ENCODE measurements at regions of chr9 and their contacts with region 1.

Region 1: DNA sequence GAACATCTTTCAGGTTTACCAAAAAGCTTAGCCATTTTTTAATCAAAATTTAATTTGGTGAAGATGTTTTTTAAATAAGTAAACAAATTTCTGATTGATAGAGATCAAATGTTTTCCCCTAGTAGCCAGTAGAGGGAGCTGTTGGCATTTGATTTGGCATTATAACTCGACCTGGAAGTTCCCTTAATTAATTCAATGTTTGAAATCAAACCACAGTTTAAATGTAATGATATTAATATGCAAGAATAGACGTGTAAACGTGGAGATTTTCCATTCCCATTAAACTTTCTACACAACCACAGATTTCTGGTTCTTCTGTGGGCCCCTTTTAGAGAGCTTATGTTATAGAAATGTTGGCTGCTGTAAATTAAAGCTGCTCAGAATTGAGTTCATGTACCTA is 148.1 kb upstream of the MPDZ start:
- DNase-seq: peak in 1 of 2 donors; percentile 16
- ATAC-seq: peak; percentile 51 to 73
- H3K4me3 ChIP-seq: peak overlapping the region in 1 of 4 donors; percentile 14
- H3K27ac ChIP-seq: peak overlapping the region; percentile 3 to 57 (median 19)
- H3K4me1 ChIP-seq: peaks cover 19 to 25% of the 10 kb centered on the region in 2 donors
- H3K27me3 ChIP-seq: no peaks in the 10 kb centered on the region
- CTCF ChIP-seq: peak; percentile 72 to 87 (median 79)
- POLR2A ChIP-seq: no peak

Region 2: GRCh38 chr9:13688994-13689600 is 261.5 kb after region 1 on chr9:
- in situ Hi-C with region 1: no loop called
- intact Hi-C with region 1: loop called (anchors 2 kb)
- DNase-seq: no peak
- ATAC-seq: peak in 1 of 2 donors; percentile 32
- H3K4me3 ChIP-seq: no peak overlapping the region
- H3K27ac ChIP-seq: peak overlapping the region; percentile 56 to 82 (median 78)
- H3K4me1 ChIP-seq: peaks cover 16 to 20% of the 10 kb centered on the region in 2 donors
- H3K27me3 ChIP-seq: no peaks in the 10 kb centered on the region
- CTCF ChIP-seq: peak in 4 of 5 experiments; percentile 23 to 62 (median 44)
- POLR2A ChIP-seq: no peak

Region 3: DNA sequence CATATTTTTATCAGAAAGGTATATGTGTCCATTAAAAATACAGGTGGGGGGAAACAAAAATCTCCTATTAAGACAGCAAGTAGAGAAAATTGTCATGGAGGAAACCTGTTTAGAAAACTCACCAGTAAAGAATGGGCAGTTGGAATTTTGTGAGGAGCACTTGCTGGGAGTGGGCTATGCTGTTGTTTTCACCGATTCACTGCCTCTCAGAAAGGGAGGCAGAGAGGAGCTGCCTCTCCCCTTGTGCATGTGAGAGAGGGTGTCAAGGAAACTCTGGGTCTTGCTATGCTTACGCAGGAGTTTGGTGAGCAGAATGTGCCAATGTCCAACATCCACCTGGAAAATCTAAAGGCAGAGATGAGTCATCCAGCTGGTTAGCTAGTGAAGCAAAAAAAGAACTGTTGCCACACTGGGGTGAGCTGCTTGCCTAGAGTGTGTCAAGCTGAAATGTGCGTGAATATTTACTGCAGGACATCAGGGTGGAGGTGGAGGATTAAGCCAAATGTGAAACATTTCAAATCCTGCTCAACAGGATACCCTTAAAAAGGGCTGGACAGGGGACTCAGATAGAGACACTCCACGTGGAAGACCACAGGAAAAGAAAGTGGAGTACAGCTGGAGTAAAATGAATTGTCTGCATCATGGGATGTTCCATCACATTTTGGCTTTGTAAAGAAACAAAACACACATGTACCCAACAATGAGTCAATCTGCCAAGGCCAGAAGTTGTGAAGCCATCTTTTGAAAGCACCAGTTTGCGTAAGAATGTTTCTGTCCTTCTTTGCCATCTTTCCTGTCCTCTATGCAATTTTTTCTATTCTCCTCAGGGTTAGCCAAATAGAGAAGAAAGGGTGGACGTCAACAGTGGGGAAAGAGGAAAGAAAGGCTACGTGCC is 301.6 kb after region 1 on chr9:
- in situ Hi-C with region 1: no loop called
- intact Hi-C with region 1: no loop called
- DNase-seq: peak; percentile 64 to 71
- ATAC-seq: peak; percentile 91 to 94
- H3K4me3 ChIP-seq: no peak overlapping the region
- H3K27ac ChIP-seq: peak overlapping the region; percentile 65 to 83 (median 73)
- H3K4me1 ChIP-seq: peaks cover 14 to 21% of the 10 kb centered on the region in 2 donors
- H3K27me3 ChIP-seq: no peaks in the 10 kb centered on the region
- CTCF ChIP-seq: no peak
- POLR2A ChIP-seq: peak; percentile 50 to 60

Region 4: GRCh38 chr9:14353222-14354056 is 925.9 kb after region 1 on chr9:
- in situ Hi-C with region 1: loop called (anchors 5 to 10 kb)
- intact Hi-C with region 1: loop called (anchors 1 kb)
- DNase-seq: peak; percentile 86 to 89
- ATAC-seq: peak; percentile 66 to 69
- H3K4me3 ChIP-seq: peak overlapping the region; percentile 15 to 40 (median 36)
- H3K27ac ChIP-seq: peak overlapping the region; percentile 84 to 90 (median 87)
- H3K4me1 ChIP-seq: peaks cover 19 to 24% of the 10 kb centered on the region in 2 donors
- H3K27me3 ChIP-seq: no peaks in the 10 kb centered on the region
- CTCF ChIP-seq: peak; percentile 87 to 95 (median 92)
- POLR2A ChIP-seq: no peak

Region 5: DNA sequence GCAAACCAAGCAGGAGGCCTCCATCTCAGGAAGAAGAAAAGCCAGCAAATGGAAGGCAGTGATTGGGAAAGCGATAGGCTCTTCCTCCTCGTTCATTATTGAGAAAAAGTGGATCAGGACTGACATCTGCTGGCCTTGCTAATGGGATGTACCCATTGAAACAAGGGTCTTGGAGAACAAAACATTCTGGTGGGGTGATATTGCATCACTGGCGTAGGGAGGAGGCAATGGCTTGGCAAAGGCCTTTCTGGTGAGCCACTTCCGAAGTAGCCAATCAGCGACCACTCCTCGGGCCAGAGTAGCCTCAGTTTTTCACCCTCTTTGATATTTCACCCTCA is 973.0 kb after region 1 on chr9:
- in situ Hi-C with region 1: loop called in 1 of 4 experiments (anchors 10 kb)
- intact Hi-C with region 1: loop called (anchors 2 kb)
- DNase-seq: peak; percentile 19 to 55
- ATAC-seq: peak; percentile 74 to 85
- H3K4me3 ChIP-seq: peak overlapping the region in 2 of 4 donors; percentile 10 to 39
- H3K27ac ChIP-seq: peak overlapping the region; percentile 2 to 62 (median 10)
- H3K4me1 ChIP-seq: peaks cover 5 to 33% of the 10 kb centered on the region in 2 donors
- H3K27me3 ChIP-seq: no peaks in the 10 kb centered on the region
- CTCF ChIP-seq: peak; percentile 40 to 68 (median 56)
- POLR2A ChIP-seq: no peak